Activated T-helper 1 cell treated with anti-CD3 and anti-CD28 coated beads, Interleukin-12 subunit alpha, Interleukin-12 subunit beta, Interleukin-2, Interleukin-4 antibody, amounts not matched to agents 30 ng/mL and 10 ng/mL and 1 ng/mL, durations not matched to agents 14 hours and 24 hours and 36 hours (primary cell): ENCODE measurements at regions of chr12 and their contacts with region 1.

Region 1: GRCh38 chr12:132828706-132829534 is at the start of gene GOLGA3:
- DNase-seq: peak; percentile 91
- H3K4me3 Mint-ChIP-seq: peak within 1 kb of the TSS; percentile 99
- H3K27ac Mint-ChIP-seq: peak within 1 kb of the TSS; percentile 100
- H3K4me1 Mint-ChIP-seq: peaks cover 43% of the 10 kb centered on the region
- H3K27me3 Mint-ChIP-seq: peaks cover 2% of the 10 kb centered on the region
- total RNA-seq, gene GOLGA3: 78.7 and 86.9 TPM in 2 replicates

Region 2: DNA sequence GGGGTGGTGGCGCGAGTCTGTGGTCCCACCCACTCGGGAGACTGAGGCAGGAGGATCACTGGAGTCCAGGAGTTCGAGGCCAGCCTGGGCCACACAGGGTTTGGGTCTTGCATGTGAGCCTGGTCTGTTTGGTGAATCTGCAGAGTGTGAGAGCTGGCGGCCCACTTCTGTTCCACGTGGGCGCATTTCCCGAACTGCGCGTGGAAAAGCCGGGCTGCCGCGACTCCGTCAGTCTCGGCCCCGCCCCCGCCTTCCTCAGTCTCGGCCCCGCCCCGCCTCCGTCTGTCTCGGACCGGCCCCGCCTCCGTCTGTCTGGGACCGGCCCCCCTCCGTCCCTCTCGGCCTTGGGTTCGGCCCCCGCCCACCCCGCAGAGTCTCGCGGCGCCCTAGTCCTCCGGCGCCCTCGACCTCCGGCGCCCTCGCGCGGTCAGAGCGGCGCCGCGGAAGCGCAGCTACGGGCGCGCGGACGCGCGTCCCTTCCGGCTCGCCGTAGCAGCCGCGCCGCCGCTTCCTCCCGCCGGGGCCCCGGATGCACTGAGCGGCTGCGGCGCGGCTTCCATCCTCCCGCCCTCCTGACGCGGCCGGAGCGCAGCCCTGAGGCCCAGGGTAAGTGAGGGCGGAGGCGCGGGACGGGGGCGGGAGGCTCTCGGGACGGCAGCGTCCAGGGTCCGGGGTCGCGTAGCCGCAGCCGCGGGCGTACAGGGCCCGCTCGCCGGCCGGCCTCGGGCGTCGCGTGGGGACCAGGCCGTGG is 879.3 kb before region 1 on chr12 and contains the start of gene EP400:
- intact Hi-C with region 1: loop called (anchors 2 kb)
- DNase-seq: peak; percentile 89
- H3K4me3 Mint-ChIP-seq: peak within 1 kb of the TSS; percentile 92
- H3K27ac Mint-ChIP-seq: peak within 1 kb of the TSS; percentile 90
- H3K4me1 Mint-ChIP-seq: peaks cover 30% of the 10 kb centered on the region
- H3K27me3 Mint-ChIP-seq: no peaks in the 10 kb centered on the region
- total RNA-seq, gene EP400: 66.6 TPM in 2 replicates

Region 3: GRCh38 chr12:132356691-132357622 is 472.0 kb before region 1 on chr12:
- intact Hi-C with region 1: no loop called
- DNase-seq: no peak
- H3K4me3 Mint-ChIP-seq: no peak overlapping the region
- H3K27ac Mint-ChIP-seq: no peak overlapping the region
- H3K4me1 Mint-ChIP-seq: no peaks in the 10 kb centered on the region
- H3K27me3 Mint-ChIP-seq: no peaks in the 10 kb centered on the region

Region 4: DNA sequence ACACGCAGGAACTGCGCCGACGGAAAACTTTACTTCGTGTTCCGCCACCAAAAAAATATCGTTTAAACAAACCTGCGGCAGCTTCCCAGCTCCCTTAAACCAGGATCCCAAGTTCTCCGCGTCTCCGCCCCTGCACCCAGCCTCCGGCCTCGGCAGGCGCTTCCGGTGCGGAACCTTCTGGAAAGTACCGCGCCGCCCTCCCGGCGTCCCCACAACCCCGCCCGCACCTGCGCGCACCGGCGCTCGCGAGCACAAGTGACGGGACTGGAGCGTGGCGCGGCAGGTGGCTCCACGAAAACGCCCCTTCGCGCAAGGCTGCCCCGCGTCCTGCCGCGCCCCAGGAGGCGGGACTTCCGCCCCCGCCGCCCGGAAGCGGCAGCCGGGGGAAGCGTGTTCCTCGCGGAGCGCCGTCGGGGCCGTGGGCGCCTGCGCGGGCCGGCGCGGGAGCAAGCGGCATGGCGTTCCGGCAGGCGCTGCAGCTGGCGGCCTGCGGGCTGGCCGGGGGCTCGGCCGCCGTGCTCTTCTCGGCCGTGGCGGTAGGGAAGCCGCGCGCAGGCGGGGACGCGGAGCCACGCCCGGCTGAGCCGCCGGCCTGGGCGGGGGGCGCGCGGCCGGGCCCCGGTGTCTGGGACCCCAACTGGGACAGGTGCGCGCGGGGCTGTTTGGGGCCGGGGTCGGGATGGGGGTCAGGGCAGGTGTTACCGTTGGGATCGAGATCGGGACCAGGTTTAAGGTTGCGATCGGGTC is 118.3 kb before region 1 on chr12 and contains the start of gene PGAM5:
- intact Hi-C with region 1: loop called (anchors 1 kb)
- DNase-seq: peak; percentile 94
- H3K4me3 Mint-ChIP-seq: peak within 1 kb of the TSS; percentile 92
- H3K27ac Mint-ChIP-seq: peak within 1 kb of the TSS; percentile 96
- H3K4me1 Mint-ChIP-seq: peaks cover 15% of the 10 kb centered on the region
- H3K27me3 Mint-ChIP-seq: no peaks in the 10 kb centered on the region
- total RNA-seq, gene PGAM5: 107 and 111 TPM in 2 replicates

Region 5: GRCh38 chr12:132908145-132909044 is 79.5 kb after region 1 on chr12:
- intact Hi-C with region 1: loop called (anchors 2 kb)
- DNase-seq: peak; percentile 92
- H3K4me3 Mint-ChIP-seq: peak overlapping the region; percentile 88
- H3K27ac Mint-ChIP-seq: peak overlapping the region; percentile 91
- H3K4me1 Mint-ChIP-seq: no peaks in the 10 kb centered on the region
- H3K27me3 Mint-ChIP-seq: peaks cover 11% of the 10 kb centered on the region

Region 6: GRCh38 chr12:133037207-133038005 is 208.5 kb after region 1 on chr12 and contains the start of gene ZNF84:
- intact Hi-C with region 1: loop called (anchors 1 kb)
- DNase-seq: peak; percentile 97
- H3K4me3 Mint-ChIP-seq: peak within 1 kb of the TSS; percentile 86
- H3K27ac Mint-ChIP-seq: peak within 1 kb of the TSS; percentile 97
- H3K4me1 Mint-ChIP-seq: no peaks in the 10 kb centered on the region
- H3K27me3 Mint-ChIP-seq: no peaks in the 10 kb centered on the region
- total RNA-seq, gene ZNF84: 18.3 and 21.2 TPM in 2 replicates

Region 7: GRCh38 chr12:133130038-133130807 is 301.3 kb after region 1 on chr12 and contains the starts of genes ZNF10 and ZNF891:
- intact Hi-C with region 1: loop called (anchors 2 kb)
- DNase-seq: peak; percentile 94
- H3K4me3 Mint-ChIP-seq: peak within 1 kb of the TSS; percentile 94
- H3K27ac Mint-ChIP-seq: peak within 1 kb of the TSS; percentile 98
- H3K4me1 Mint-ChIP-seq: peaks cover 21% of the 10 kb centered on the region
- H3K27me3 Mint-ChIP-seq: no peaks in the 10 kb centered on the region
- total RNA-seq, gene ZNF10: 5.1 and 6.4 TPM in 2 replicates
- total RNA-seq, gene ZNF891: 2.3 and 2.4 TPM in 2 replicates